ENCODE measurements at regions of chr10 and their contacts with region 1.

Region 1: GRCh38 chr10:43574001-43574892 is at the start of gene ZNF239:
- DNase-seq: peak; percentile 62 to 93 (median 78)
- ATAC-seq: peak; percentile 90
- H3K4me3 ChIP-seq: peak within 1 kb of the TSS; percentile 55
- H3K4me3 Mint-ChIP-seq: peak within 1 kb of the TSS; percentile 92
- H3K27ac ChIP-seq: peak within 1 kb of the TSS; percentile 49 to 50
- H3K27ac Mint-ChIP-seq: peak within 1 kb of the TSS; percentile 87
- H3K4me1 ChIP-seq: peaks cover 31% of the 10 kb centered on the region
- H3K4me1 Mint-ChIP-seq: peaks cover 58% of the 10 kb centered on the region
- H3K27me3 ChIP-seq: no peaks in the 10 kb centered on the region
- H3K27me3 Mint-ChIP-seq: no peaks in the 10 kb centered on the region
- CTCF ChIP-seq: no peak
- total RNA-seq, gene ZNF239: 0.59 to 0.63 TPM

Region 2: DNA sequence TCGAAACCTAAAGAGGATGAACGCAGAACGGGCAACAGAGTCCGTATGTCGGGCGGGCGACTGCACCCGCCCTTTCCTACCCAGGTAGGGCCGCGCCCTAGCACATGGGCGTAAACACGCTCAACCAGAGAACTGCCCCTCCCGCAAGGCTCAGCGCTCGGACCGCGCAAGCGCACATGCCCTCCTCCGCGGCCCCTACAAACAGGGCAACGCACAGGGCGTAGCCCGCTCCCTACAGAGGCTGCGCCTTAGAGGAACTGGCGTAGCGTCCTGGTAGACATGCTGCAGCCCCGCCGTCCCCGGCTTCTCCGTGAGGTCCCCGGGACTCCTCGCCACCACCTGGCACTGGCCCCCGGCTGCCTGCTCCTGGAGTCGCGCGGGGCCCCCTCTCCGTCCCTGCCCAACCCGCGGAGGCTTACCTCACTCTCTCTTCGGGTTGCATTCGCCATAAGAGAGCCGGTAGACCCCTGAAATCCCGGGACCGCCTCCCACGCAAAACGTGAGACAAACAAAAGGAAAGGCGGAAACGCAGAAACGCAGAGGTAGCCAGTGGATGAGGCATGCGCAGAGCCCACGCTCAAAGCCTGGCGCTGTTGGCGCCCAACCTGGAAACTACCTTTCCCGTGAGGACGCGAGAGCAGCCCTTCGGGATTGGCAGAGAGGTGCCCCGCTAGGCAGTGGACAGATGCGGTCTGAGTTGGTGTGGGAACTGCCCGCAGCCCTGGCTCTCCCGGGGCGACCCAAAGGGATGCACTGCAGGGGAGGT is 936.0 kb before region 1 on chr10 and contains the start of gene ZNF33B:
- CTCF ChIA-PET with region 1: no interaction called
- POLR2A ChIA-PET with region 1: no interaction called
- intact Hi-C with region 1: loop called in 1 of 2 experiments (anchors 5 kb)
- DNase-seq: peak; percentile 89 to 97 (median 94)
- ATAC-seq: peak; percentile 91
- H3K4me3 ChIP-seq: peak within 1 kb of the TSS; percentile 71
- H3K4me3 Mint-ChIP-seq: peak within 1 kb of the TSS; percentile 96
- H3K27ac ChIP-seq: peak within 1 kb of the TSS; percentile 91 to 92
- H3K27ac Mint-ChIP-seq: peak within 1 kb of the TSS; percentile 97
- H3K4me1 ChIP-seq: peaks cover 18% of the 10 kb centered on the region
- H3K4me1 Mint-ChIP-seq: peaks cover 52% of the 10 kb centered on the region
- H3K27me3 ChIP-seq: no peaks in the 10 kb centered on the region
- H3K27me3 Mint-ChIP-seq: no peaks in the 10 kb centered on the region
- CTCF ChIP-seq: no peak
- total RNA-seq, gene ZNF33B: 26.6 to 27.0 TPM

Region 3: DNA sequence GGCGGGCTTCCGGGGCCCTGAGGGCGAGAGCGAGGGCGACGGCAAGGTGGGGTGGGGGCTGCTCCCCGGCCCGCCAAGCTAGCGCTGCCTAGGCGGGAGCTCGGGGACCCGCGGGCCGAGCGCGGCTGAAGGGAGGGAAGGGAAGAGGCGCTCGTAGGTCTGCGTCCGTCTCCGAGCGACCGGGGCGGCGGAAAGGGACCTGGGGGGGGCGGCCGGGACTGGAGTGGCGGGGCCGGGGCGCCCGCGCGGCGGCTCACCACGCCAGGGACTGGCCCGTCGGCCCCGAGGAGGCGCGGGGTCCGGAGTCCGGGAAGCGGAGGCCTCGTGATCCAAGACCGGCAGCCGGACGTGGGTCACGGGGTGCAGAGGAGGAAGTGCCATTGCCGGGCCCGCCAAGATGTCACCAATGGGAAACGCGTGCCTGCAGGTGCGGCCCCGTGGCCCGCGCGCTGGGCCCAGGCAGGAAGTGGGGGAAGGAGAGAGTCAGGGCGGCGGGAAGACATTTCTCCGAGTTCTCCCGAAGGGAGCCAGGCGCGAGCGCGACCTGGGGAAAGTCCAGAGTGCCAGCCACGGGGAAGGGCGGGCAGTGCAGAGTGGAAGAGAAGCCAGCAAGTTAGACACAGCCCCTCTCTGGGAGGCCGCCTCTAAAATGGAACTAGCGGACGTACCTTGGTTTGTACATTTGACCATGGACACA is 177.2 kb before region 1 on chr10:
- CTCF ChIA-PET with region 1: no interaction called
- POLR2A ChIA-PET with region 1: no interaction called
- intact Hi-C with region 1: loop called in 1 of 2 experiments (anchors 10 kb)
- DNase-seq: peak; percentile 49 to 90 (median 64)
- ATAC-seq: peak; percentile 54
- H3K4me3 ChIP-seq: peak overlapping the region; percentile 67
- H3K4me3 Mint-ChIP-seq: peak overlapping the region; percentile 94
- H3K27ac ChIP-seq: peak overlapping the region; percentile 92 to 94
- H3K27ac Mint-ChIP-seq: peak overlapping the region; percentile 93
- H3K4me1 ChIP-seq: peaks cover 82% of the 10 kb centered on the region
- H3K4me1 Mint-ChIP-seq: peaks cover 86% of the 10 kb centered on the region
- H3K27me3 ChIP-seq: no peaks in the 10 kb centered on the region
- H3K27me3 Mint-ChIP-seq: no peaks in the 10 kb centered on the region
- CTCF ChIP-seq: no peak

Region 4: DNA sequence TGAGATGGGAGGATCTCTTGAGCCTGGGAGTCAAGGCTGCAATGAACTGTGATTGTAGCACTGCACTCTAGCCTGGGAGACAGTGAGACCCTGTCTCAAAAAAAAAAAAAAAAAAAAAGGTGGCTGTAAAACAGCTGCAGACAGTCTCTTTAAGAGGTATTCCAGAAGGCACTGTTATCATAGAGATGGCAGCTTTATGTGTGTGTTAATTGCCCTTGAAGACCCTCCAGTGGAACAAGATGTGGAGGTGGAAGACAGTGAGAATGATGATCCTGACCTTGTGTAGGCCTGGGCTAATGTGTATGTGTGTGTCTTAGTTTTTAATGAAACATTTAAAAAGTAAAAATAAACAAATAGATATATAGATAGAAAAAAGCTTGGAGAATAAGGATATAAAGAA is 71.3 kb before region 1 on chr10:
- CTCF ChIA-PET with region 1: no interaction called
- POLR2A ChIA-PET with region 1: no interaction called
- intact Hi-C with region 1: no loop called
- DNase-seq: no peak
- ATAC-seq: no peak
- H3K4me3 ChIP-seq: no peak overlapping the region
- H3K4me3 Mint-ChIP-seq: no peak overlapping the region
- H3K27ac ChIP-seq: no peak overlapping the region
- H3K27ac Mint-ChIP-seq: no peak overlapping the region
- H3K4me1 ChIP-seq: no peaks in the 10 kb centered on the region
- H3K4me1 Mint-ChIP-seq: no peaks in the 10 kb centered on the region
- H3K27me3 ChIP-seq: no peaks in the 10 kb centered on the region
- H3K27me3 Mint-ChIP-seq: no peaks in the 10 kb centered on the region
- CTCF ChIP-seq: no peak

Region 5: DNA sequence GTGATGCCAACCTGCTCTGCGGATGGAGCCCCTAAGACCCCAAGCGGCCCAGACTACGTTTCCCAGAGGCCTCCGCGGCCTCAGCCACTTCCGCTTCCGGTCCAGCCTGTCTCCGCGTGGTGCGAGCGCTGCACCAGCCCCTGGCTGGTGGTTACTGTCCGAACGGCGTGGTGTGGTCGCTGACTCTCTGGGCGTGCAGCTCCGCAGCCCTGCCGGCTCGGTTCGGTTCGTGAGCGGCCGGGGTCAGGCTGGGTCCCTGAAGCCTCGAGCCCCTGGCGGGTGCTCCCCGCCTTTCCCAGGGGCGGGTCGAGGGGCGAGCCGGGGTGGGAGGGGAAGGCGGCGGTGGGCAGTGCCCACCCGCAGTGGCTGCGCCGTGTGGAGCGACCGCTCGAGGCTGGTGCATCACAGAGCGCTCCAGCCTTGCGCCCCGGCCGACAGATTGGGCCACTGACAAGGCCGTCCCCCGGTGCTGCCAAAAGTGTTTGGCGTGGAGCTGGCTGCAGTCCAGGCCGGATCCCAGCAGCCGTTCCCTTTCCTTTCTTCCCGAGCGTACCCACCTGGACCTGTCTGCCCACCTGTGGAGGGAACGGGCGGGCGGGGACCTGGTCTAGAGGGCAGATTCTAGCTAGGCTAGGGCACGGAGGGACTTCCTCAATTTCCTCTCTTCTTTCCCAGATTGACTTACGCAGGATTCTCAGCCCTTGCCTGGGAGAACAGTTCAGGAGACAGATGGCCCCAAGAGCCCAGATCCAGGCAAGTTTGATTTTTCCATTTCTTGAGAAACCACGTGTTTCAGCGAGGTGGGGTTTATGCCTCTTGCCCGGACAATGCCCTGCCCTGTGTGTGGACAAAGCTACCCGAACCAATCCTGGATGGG is 32.3 kb after region 1 on chr10 and contains the start of gene ZNF485:
- CTCF ChIA-PET with region 1: no interaction called
- POLR2A ChIA-PET with region 1: interaction called, 18 read pairs
- intact Hi-C with region 1: loop called in 1 of 2 experiments (anchors 1 kb)
- DNase-seq: peak; percentile 42 to 77 (median 60)
- ATAC-seq: peak; percentile 87
- H3K4me3 ChIP-seq: peak within 1 kb of the TSS; percentile 81
- H3K4me3 Mint-ChIP-seq: peak within 1 kb of the TSS; percentile 89
- H3K27ac ChIP-seq: no peak within 1 kb of the TSS
- H3K27ac Mint-ChIP-seq: peak within 1 kb of the TSS; percentile 47
- H3K4me1 ChIP-seq: peaks cover 15% of the 10 kb centered on the region
- H3K4me1 Mint-ChIP-seq: peaks cover 41% of the 10 kb centered on the region
- H3K27me3 ChIP-seq: no peaks in the 10 kb centered on the region
- H3K27me3 Mint-ChIP-seq: no peaks in the 10 kb centered on the region
- CTCF ChIP-seq: no peak
- total RNA-seq, gene ZNF485: 0.75 to 1.2 TPM

Region 6: DNA sequence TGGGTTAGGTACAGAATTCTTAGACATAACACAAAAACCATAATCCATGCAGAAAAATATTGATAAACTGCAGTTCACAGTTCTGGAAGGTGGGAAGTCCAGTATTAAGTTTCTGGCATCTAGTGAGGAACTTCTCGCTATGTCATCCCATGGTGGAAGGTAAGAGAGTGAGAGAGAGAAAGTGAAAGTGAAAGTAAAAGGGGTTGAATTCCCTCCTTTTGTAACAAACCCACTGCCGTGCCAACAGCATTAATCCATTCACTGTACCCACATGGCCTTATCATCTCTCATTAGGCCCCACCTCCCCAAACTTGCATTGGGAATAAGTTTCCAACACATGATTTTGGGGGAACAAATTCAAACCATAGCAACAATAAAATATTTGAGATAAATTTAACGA is 49.1 kb after region 1 on chr10:
- CTCF ChIA-PET with region 1: no interaction called
- POLR2A ChIA-PET with region 1: no interaction called
- intact Hi-C with region 1: no loop called
- DNase-seq: peak in 3 of 14 experiments; percentile 34 to 66 (median 41)
- ATAC-seq: peak; percentile 46
- H3K4me3 ChIP-seq: peak overlapping the region; percentile 45
- H3K4me3 Mint-ChIP-seq: peak overlapping the region; percentile 86
- H3K27ac ChIP-seq: no peak overlapping the region
- H3K27ac Mint-ChIP-seq: peak overlapping the region; percentile 47
- H3K4me1 ChIP-seq: no peaks in the 10 kb centered on the region
- H3K4me1 Mint-ChIP-seq: peaks cover 19% of the 10 kb centered on the region
- H3K27me3 ChIP-seq: no peaks in the 10 kb centered on the region
- H3K27me3 Mint-ChIP-seq: no peaks in the 10 kb centered on the region
- CTCF ChIP-seq: no peak

Region 7: GRCh38 chr10:43739161-43739560 is 164.9 kb after region 1 on chr10:
- CTCF ChIA-PET with region 1: no interaction called
- POLR2A ChIA-PET with region 1: no interaction called
- intact Hi-C with region 1: no loop called
- DNase-seq: no peak
- ATAC-seq: no peak
- H3K4me3 ChIP-seq: no peak overlapping the region
- H3K4me3 Mint-ChIP-seq: no peak overlapping the region
- H3K27ac ChIP-seq: no peak overlapping the region
- H3K27ac Mint-ChIP-seq: no peak overlapping the region
- H3K4me1 ChIP-seq: no peaks in the 10 kb centered on the region
- H3K4me1 Mint-ChIP-seq: no peaks in the 10 kb centered on the region
- H3K27me3 ChIP-seq: no peaks in the 10 kb centered on the region
- H3K27me3 Mint-ChIP-seq: no peaks in the 10 kb centered on the region
- CTCF ChIP-seq: no peak

Measured in CD4-positive, alpha-beta T cell (primary cell).